ENCODE measurements at regions of chr11 and their contacts with region 1.

Region 1: GRCh38 chr11:67167086-67167485 is 48.0 kb downstream of the KDM2A start:
- DNase-seq: no peak
- ATAC-seq: no peak
- H3K4me3 Mint-ChIP-seq: no peak overlapping the region
- H3K27ac Mint-ChIP-seq: no peak overlapping the region
- H3K4me1 Mint-ChIP-seq: peaks cover 27% of the 10 kb centered on the region
- H3K27me3 Mint-ChIP-seq: no peaks in the 10 kb centered on the region

Region 2: DNA sequence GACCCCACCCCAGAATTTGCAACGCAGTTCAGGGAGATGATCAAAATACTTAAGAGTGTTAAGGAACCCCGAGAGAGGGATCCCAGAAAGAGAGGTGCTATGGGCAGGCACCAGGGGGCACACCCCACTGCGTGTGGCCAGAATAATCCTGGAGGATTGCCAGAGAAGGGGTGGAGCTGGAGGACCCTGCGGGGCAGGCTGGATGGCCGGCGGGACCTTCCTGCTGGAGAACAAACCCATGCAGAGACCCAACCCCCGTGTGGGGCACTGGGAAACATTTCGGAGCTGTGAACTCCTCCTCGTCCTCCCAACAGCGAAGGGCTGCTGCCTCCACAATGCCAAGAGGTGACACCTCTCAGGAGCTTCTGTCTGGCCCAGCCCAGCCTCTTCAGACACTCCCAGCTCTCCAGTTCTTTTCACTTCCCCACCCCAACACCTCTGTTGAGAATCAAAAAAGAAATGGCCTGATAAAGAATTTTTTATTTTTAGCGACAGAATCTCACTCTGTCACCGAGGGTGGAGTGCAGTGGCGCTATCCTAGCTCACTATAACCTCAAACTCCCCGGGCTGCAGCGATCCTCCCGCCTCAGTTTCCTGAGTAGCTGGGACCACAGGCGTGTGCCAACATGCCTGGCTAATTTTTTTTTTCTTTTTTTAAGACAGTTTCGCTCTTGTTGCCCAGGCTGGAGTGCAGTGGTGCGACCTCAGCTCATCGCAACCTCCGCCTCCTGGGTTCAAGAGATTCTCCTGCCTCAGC is 84.9 kb before region 1 on chr11:
- CTCF ChIA-PET with region 1: interaction called, 5 read pairs
- POLR2A ChIA-PET with region 1: no interaction called
- intact Hi-C with region 1: loop called (anchors 1 kb)
- DNase-seq: no peak
- ATAC-seq: no peak
- H3K4me3 Mint-ChIP-seq: no peak overlapping the region
- H3K27ac Mint-ChIP-seq: no peak overlapping the region
- H3K4me1 Mint-ChIP-seq: peaks cover 19% of the 10 kb centered on the region
- H3K27me3 Mint-ChIP-seq: peaks cover 5% of the 10 kb centered on the region

Region 3: DNA sequence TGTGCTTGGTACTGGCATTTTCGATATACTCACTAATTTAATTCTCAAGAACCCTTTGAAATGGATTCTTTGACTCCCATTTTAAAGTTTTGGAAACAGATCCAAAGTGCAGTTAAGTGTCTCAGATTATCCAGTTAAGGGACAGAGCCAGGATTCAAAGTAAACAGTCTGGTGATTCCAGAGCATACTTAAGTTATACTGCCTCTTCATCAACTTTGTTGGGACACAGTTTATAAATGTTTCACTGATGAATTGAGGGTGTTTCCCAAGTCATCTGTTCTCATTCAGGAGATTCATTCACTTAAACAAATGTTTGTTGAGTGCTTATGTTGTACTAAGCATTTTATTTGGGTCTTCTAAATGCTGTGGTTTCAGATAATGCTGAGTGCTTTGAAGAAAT is 30.9 kb before region 1 on chr11:
- CTCF ChIA-PET with region 1: no interaction called
- POLR2A ChIA-PET with region 1: no interaction called
- intact Hi-C with region 1: no loop called
- DNase-seq: no peak
- ATAC-seq: no peak
- H3K4me3 Mint-ChIP-seq: no peak overlapping the region
- H3K27ac Mint-ChIP-seq: no peak overlapping the region
- H3K4me1 Mint-ChIP-seq: peaks cover 12% of the 10 kb centered on the region
- H3K27me3 Mint-ChIP-seq: no peaks in the 10 kb centered on the region

Region 4: DNA sequence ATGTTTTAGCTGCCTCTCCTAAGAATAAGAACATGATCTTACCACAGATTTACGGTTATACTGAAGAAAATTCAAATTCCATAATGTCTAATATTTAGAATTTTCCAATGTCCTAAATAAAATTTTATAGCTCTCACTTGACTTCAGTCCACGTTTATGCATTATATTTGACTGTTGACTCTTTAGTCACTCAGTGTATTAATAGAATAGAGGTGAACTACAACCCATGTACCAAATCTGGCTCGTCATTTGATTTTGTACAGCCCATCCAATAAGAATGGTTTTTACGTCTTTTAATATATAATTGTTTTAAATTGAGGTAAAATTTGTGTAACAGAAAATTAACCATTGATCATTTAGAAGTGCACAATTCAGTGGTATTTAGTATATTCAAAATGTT is 13.1 kb before region 1 on chr11:
- CTCF ChIA-PET with region 1: interaction called, 13 read pairs
- POLR2A ChIA-PET with region 1: no interaction called
- intact Hi-C with region 1: no loop called
- DNase-seq: no peak
- ATAC-seq: no peak
- H3K4me3 Mint-ChIP-seq: no peak overlapping the region
- H3K27ac Mint-ChIP-seq: no peak overlapping the region
- H3K4me1 Mint-ChIP-seq: peaks cover 11% of the 10 kb centered on the region
- H3K27me3 Mint-ChIP-seq: no peaks in the 10 kb centered on the region

Measured in activated CD4-positive, alpha-beta T cell treated with anti-CD3 and anti-CD28 coated beads for 36 hours (primary cell).